Right lobe of liver (tissue), 6 donors: ENCODE measurements at regions of chr11 and their contacts with region 1.

Region 1: DNA sequence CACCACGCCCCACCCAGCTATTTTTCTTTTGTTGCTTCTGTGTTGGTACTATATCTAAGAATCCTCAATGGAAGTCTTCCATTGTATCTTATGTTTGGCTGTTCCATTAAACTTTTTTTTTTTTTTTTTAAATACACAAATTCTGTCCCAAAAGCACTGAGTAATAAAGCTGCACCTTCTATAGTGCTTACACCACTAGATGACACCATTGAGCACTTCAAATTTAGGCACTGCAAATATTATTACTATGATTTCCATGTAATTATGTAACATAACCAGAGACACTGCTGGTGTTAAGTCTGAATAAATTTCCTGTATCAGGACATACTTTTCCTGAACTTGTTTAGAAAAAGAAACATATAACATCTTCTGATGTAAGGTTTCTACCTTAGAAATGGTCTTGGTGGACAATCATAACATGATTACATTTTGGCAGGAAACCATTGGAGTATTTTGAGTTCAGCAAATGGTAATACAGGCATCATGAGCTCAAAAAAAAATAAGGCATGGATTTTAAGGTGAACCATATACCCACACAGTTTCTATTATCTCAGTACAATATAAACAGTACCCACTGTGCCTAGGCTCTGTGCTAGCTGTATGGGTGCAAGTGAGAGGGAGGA is 110.5 kb downstream of the ATG16L2 start:
- DNase-seq: no peak
- ATAC-seq: peak; percentile 63 to 74 (median 70)
- H3K4me3 ChIP-seq: no peak overlapping the region
- H3K27ac ChIP-seq: no peak overlapping the region
- H3K4me1 ChIP-seq: peaks cover 0 to 22% (median 0%) of the 10 kb centered on the region in 4 donors
- H3K27me3 ChIP-seq: no peaks in the 10 kb centered on the region
- CTCF ChIP-seq: peak; percentile 51 to 56 (median 54)
- POLR2A ChIP-seq: no peak

Region 2: DNA sequence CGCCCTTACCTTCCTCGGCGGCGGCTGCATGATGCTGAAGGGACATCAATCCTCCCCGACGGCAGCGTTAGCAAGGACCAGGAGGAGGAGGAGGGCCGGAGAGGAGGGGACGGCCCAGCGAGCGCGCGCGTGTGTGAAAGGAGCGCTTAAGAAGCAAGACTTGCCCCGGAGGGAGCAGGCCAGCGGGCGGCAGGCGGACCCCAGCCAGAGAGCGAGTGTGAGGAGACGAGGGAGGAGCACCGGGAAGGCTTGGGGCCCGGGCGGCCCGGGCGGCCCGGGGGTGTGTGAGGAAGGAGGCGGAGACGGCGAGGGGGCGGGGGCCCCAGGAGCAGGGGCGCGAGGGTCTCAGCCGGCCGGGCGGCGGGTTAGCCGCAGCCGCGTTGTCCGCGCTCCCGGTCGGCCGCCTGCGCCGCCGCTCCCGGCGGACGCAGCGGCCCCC is 217.2 kb after region 1 on chr11:
- intact Hi-C with region 1: no loop called
- DNase-seq: peak; percentile 80 to 88 (median 83)
- ATAC-seq: peak; percentile 20 to 47 (median 38)
- H3K4me3 ChIP-seq: peak overlapping the region; percentile 75 to 86 (median 84)
- H3K27ac ChIP-seq: peak overlapping the region; percentile 94 to 97 (median 96)
- H3K4me1 ChIP-seq: peaks cover 0 to 44% (median 16%) of the 10 kb centered on the region in 4 donors
- H3K27me3 ChIP-seq: no peaks in the 10 kb centered on the region
- CTCF ChIP-seq: no peak
- POLR2A ChIP-seq: peak; percentile 51

Region 3: DNA sequence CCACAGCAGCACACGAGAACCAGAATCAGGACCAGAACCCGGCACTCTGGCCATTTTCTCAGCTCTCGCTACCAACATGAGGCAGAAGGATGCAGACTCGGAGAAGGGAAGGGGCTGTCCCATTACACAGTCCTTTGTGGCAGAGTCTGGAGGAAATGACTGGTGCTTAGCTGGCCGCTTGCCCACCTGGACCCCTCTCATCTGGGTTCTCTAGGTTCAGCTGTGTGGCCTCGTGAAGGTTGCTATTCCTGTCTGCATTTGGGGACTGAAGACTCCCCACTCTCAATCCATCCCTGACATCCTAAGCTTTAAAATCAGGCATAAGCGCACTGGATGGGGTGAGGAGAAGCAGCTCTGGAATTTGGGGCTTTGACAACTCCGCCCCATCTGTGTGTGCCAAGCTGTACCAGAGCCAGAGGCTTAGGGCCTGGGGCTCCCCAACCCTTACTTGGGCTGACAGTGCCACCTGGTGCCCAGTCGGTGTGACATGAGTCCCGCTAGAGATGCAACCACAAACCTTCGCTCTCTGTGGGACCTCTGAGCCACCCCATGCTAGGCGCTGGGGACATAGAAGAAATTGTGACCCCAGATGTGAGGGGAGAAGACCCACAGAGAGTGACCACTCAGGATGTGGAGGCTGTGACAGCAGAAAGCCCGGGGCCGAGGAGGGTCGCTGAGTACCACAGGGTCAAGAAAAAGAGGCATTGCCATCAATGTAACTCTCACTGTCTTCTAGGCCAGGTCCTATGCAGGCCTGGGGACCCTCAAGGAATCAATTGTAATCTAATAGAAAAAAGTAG is 253.3 kb after region 1 on chr11:
- intact Hi-C with region 1: loop called in 1 of 2 experiments (anchors 10 kb)
- DNase-seq: peak; percentile 87 to 88 (median 87)
- ATAC-seq: peak; percentile 70 to 91 (median 82)
- H3K4me3 ChIP-seq: no peak overlapping the region
- H3K27ac ChIP-seq: peak overlapping the region in 1 of 3 donors; percentile 33
- H3K4me1 ChIP-seq: peaks cover 0 to 37% (median 6%) of the 10 kb centered on the region in 4 donors
- H3K27me3 ChIP-seq: no peaks in the 10 kb centered on the region
- CTCF ChIP-seq: peak; percentile 75 to 92 (median 82)
- POLR2A ChIP-seq: no peak